ENCODE measurements at regions of chr3 and their contacts with region 1.

Region 1: GRCh38 chr3:190786898-190787297 is 75.6 kb downstream of the GMNC start:
- DNase-seq: peak; percentile 61
- ATAC-seq: peak; percentile 86
- H3K4me3 ChIP-seq: no peak overlapping the region; the same call in 1 of the 2 replicates
- H3K27ac ChIP-seq: no peak overlapping the region
- H3K4me1 ChIP-seq: peaks cover 20% of the 10 kb centered on the region
- H3K27me3 ChIP-seq: no peaks in the 10 kb centered on the region
- CTCF ChIP-seq: no peak

Region 2: GRCh38 chr3:190709351-190709773 is 77.5 kb before region 1 on chr3:
- CTCF ChIA-PET with region 1: no interaction called
- POLR2A ChIA-PET with region 1: no interaction called
- intact Hi-C with region 1: loop called (anchors 2 kb)
- DNase-seq: peak; percentile 79
- ATAC-seq: peak; percentile 98
- H3K4me3 ChIP-seq: no peak overlapping the region
- H3K27ac ChIP-seq: no peak overlapping the region
- H3K4me1 ChIP-seq: peaks cover 15% of the 10 kb centered on the region
- H3K27me3 ChIP-seq: no peaks in the 10 kb centered on the region
- CTCF ChIP-seq: no peak

Measured in PC-3 (cell line).